GM12878 (cell line): ENCODE measurements at regions of chr9 and their contacts with region 1.

Region 1: GRCh38 chr9:133945314-133945975 is 46.7 kb downstream of the VAV2 start:
- DNase-seq: peak; percentile 89
- ATAC-seq: peak; percentile 87
- H3K4me3 ChIP-seq: peak overlapping the region; percentile 35; the same call in 1 of the 2 replicates
- H3K27ac ChIP-seq: peak overlapping the region; percentile 89
- H3K4me1 ChIP-seq: peaks cover 32% of the 10 kb centered on the region
- H3K27me3 ChIP-seq: no peaks in the 10 kb centered on the region
- CTCF ChIP-seq: no peak
- EP300 ChIP-seq: peak; percentile 73 to 85; a peak in 3 of 4 replicates
- POLR2A ChIP-seq: no peak
- RAD21 ChIP-seq: no peak

Region 2: DNA sequence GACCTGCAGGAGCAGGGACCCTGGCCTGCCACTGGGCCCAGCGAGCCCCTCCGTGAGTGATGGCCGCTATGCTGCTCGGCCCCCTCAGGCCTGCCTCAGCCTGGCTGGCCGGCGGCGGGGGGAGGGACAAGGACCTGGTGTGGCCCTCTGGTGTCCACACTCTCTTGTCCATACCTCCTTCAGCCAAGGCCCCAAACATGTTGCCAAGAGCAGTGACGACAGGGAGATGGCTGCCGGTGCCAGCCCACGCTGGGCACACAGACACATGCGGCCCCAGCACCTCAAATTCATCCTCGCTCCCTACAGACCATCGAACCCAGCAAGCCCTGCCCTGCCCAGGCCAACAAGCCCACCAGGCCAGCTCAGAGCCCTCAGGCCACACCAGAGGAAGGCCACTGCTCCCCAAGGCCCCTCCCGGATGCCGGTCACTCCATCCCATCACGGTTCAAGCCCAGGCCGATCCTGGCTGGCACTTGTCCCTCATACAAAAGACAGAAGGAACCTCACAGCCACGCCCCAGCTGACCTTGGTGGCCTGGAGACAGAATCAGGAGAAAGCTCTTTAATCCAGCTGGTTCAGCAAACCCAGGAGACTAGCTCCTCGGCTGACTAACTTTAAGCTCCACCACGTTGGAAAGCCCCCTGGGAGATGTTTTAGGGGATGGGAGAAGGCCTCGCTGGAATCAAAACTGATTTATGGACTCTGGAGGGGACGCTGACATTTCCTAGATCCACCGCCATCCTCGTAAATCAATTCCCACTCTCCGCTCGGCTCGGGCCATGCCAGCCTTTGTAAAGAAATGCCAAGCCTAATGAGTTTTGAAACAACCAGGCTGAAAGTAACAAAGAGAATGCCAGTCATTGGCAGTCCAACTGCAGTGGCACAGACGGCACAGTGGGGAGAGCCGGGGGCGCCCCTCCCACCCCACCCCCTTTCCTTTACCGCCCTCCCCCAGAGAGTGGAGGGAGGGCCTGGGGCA is 38.2 kb before region 1 on chr9:
- CTCF ChIA-PET with region 1: interaction called, 7 read pairs
- POLR2A ChIA-PET with region 1: interaction called, 35 read pairs
- RAD21 ChIA-PET with region 1: interaction called, 7 read pairs
- SMC1A ChIA-PET with region 1: interaction called, 33 read pairs
- in situ Hi-C with region 1: no loop called
- intact Hi-C with region 1: loop called (anchors 1 kb)
- DNase-seq: no peak
- ATAC-seq: no peak
- H3K4me3 ChIP-seq: no peak overlapping the region
- H3K27ac ChIP-seq: no peak overlapping the region
- H3K4me1 ChIP-seq: peaks cover 14% of the 10 kb centered on the region
- H3K27me3 ChIP-seq: no peaks in the 10 kb centered on the region
- CTCF ChIP-seq: no peak
- EP300 ChIP-seq: no peak
- POLR2A ChIP-seq: no peak
- RAD21 ChIP-seq: no peak

Region 3: GRCh38 chr9:133967014-133967741 is 21.7 kb after region 1 on chr9:
- CTCF ChIA-PET with region 1: interaction called, 3 read pairs
- POLR2A ChIA-PET with region 1: interaction called, 11 read pairs
- RAD21 ChIA-PET with region 1: interaction called, 32 read pairs
- SMC1A ChIA-PET with region 1: interaction called, 11 read pairs
- in situ Hi-C with region 1: no loop called
- intact Hi-C with region 1: no loop called
- DNase-seq: no peak
- ATAC-seq: no peak
- H3K4me3 ChIP-seq: no peak overlapping the region
- H3K27ac ChIP-seq: no peak overlapping the region
- H3K4me1 ChIP-seq: peaks cover 30% of the 10 kb centered on the region
- H3K27me3 ChIP-seq: no peaks in the 10 kb centered on the region
- CTCF ChIP-seq: no peak
- EP300 ChIP-seq: no peak
- POLR2A ChIP-seq: no peak
- RAD21 ChIP-seq: no peak